Activated B cell treated with CpG ODN at 0.5 μM for 24 hours (primary cell): ENCODE measurements at regions of chr3 and their contacts with region 1.

Region 1: GRCh38 chr3:59857589-59858346 is 807.9 kb upstream of the CFAP20DC start:
- DNase-seq: peak; percentile 60
- ATAC-seq: peak; percentile 99
- H3K4me3 Mint-ChIP-seq: peak overlapping the region; percentile 48
- H3K27ac Mint-ChIP-seq: peak overlapping the region; percentile 39
- H3K4me1 Mint-ChIP-seq: peaks cover 5% of the 10 kb centered on the region
- H3K27me3 Mint-ChIP-seq: peaks cover 3% of the 10 kb centered on the region
- CTCF ChIP-seq: peak; percentile 60

Region 2: DNA sequence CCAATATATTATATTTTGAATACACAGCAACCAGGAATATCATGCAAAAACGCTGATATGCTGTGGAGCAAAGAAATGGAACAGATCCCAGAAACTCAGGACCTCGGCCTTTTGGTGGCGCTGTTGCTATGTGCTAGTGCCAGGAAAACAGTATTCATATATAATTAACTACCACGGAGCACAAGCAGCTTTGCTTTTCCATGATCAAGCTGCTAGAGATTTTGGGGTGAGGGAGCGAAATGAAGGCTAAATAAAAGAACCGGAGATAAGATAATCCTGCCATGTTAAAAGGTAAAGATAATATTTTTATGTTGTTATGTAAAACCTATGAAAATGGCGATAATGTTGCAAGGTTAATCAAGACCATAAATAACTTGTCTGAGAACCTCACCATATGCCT is 1033.5 kb before region 1 on chr3:
- CTCF ChIA-PET with region 1: interaction called, 3 read pairs
- POLR2A ChIA-PET with region 1: no interaction called
- intact Hi-C with region 1: loop called (anchors 1 kb)
- DNase-seq: no peak
- ATAC-seq: no peak
- H3K4me3 Mint-ChIP-seq: no peak overlapping the region
- H3K27ac Mint-ChIP-seq: no peak overlapping the region
- H3K4me1 Mint-ChIP-seq: peaks cover 5% of the 10 kb centered on the region
- H3K27me3 Mint-ChIP-seq: no peaks in the 10 kb centered on the region
- CTCF ChIP-seq: no peak

Region 3: GRCh38 chr3:59049671-59050331 is 808.0 kb before region 1 on chr3 and contains the start of gene CFAP20DC:
- CTCF ChIA-PET with region 1: no interaction called
- POLR2A ChIA-PET with region 1: no interaction called
- intact Hi-C with region 1: loop called (anchors 5 kb)
- DNase-seq: peak; percentile 85
- ATAC-seq: peak; percentile 96
- H3K4me3 Mint-ChIP-seq: peak within 1 kb of the TSS; percentile 81
- H3K27ac Mint-ChIP-seq: peak within 1 kb of the TSS; percentile 61
- H3K4me1 Mint-ChIP-seq: peaks cover 7% of the 10 kb centered on the region
- H3K27me3 Mint-ChIP-seq: no peaks in the 10 kb centered on the region
- CTCF ChIP-seq: no peak
- total RNA-seq, gene CFAP20DC: 1.0 and 1.6 TPM in 2 replicates

Region 4: GRCh38 chr3:59313365-59313764 is 544.4 kb before region 1 on chr3:
- CTCF ChIA-PET with region 1: interaction called, 15 read pairs
- POLR2A ChIA-PET with region 1: no interaction called
- intact Hi-C with region 1: loop called (anchors 1 kb)
- DNase-seq: no peak
- ATAC-seq: peak; percentile 40
- H3K4me3 Mint-ChIP-seq: no peak overlapping the region
- H3K27ac Mint-ChIP-seq: no peak overlapping the region
- H3K4me1 Mint-ChIP-seq: no peaks in the 10 kb centered on the region
- H3K27me3 Mint-ChIP-seq: no peaks in the 10 kb centered on the region
- CTCF ChIP-seq: no peak

Region 5: DNA sequence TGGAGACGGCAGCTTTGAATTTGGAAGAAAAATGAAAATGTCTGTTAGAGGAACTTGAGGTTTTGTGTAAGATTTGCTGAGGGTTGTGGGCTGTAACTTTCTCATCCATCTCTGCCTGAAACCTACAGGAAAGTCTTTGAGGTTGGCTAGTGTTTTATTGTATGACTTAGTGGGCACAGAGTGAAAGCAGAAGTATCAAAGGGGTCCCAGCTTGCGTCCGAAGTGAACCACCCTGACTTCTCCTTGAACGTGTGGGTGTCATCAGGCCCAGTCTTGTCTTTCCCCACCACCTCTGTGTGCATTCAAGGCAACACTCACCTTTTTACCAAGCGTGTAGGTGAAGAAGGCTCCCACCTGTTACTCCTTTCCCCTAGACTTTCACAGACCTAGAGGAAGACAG is 125.8 kb before region 1 on chr3:
- CTCF ChIA-PET with region 1: no interaction called
- POLR2A ChIA-PET with region 1: no interaction called
- intact Hi-C with region 1: no loop called
- DNase-seq: no peak
- ATAC-seq: no peak
- H3K4me3 Mint-ChIP-seq: no peak overlapping the region
- H3K27ac Mint-ChIP-seq: no peak overlapping the region
- H3K4me1 Mint-ChIP-seq: peaks cover 10% of the 10 kb centered on the region
- H3K27me3 Mint-ChIP-seq: no peaks in the 10 kb centered on the region
- CTCF ChIP-seq: no peak

Region 6: GRCh38 chr3:59809710-59810444 is 47.9 kb before region 1 on chr3:
- CTCF ChIA-PET with region 1: interaction called, 6 read pairs
- POLR2A ChIA-PET with region 1: no interaction called
- intact Hi-C with region 1: loop called (anchors 1 kb)
- DNase-seq: no peak
- ATAC-seq: no peak
- H3K4me3 Mint-ChIP-seq: no peak overlapping the region
- H3K27ac Mint-ChIP-seq: peak overlapping the region; percentile 10
- H3K4me1 Mint-ChIP-seq: peaks cover 25% of the 10 kb centered on the region
- H3K27me3 Mint-ChIP-seq: no peaks in the 10 kb centered on the region
- CTCF ChIP-seq: no peak

Region 7: GRCh38 chr3:60528651-60529050 is 670.9 kb after region 1 on chr3:
- CTCF ChIA-PET with region 1: no interaction called
- POLR2A ChIA-PET with region 1: interaction called, 10 read pairs
- intact Hi-C with region 1: no loop called
- DNase-seq: no peak
- ATAC-seq: no peak
- H3K4me3 Mint-ChIP-seq: no peak overlapping the region
- H3K27ac Mint-ChIP-seq: no peak overlapping the region
- H3K4me1 Mint-ChIP-seq: no peaks in the 10 kb centered on the region
- H3K27me3 Mint-ChIP-seq: no peaks in the 10 kb centered on the region
- CTCF ChIP-seq: no peak